Activated CD4-positive, alpha-beta T cell treated with anti-CD3 and anti-CD28 coated beads, Interleukin-2, amount 10 ng/mL, durations not matched to agents 24 days and 14 days (primary cell): ENCODE measurements at regions of chr1 and their contacts with region 1.

Region 1: GRCh38 chr1:76254104-76255030 is 179.8 kb downstream of the ST6GALNAC3 start:
- DNase-seq: no peak
- H3K4me3 Mint-ChIP-seq: no peak overlapping the region
- H3K27ac Mint-ChIP-seq: peak overlapping the region; percentile 46
- H3K4me1 Mint-ChIP-seq: peaks cover 39% of the 10 kb centered on the region
- H3K27me3 Mint-ChIP-seq: no peaks in the 10 kb centered on the region

Region 2: GRCh38 chr1:75991497-75992114 is 262.8 kb before region 1 on chr1:
- intact Hi-C with region 1: no loop called
- DNase-seq: peak; percentile 86
- H3K4me3 Mint-ChIP-seq: no peak overlapping the region
- H3K27ac Mint-ChIP-seq: no peak overlapping the region
- H3K4me1 Mint-ChIP-seq: no peaks in the 10 kb centered on the region
- H3K27me3 Mint-ChIP-seq: peaks cover 2% of the 10 kb centered on the region

Region 3: DNA sequence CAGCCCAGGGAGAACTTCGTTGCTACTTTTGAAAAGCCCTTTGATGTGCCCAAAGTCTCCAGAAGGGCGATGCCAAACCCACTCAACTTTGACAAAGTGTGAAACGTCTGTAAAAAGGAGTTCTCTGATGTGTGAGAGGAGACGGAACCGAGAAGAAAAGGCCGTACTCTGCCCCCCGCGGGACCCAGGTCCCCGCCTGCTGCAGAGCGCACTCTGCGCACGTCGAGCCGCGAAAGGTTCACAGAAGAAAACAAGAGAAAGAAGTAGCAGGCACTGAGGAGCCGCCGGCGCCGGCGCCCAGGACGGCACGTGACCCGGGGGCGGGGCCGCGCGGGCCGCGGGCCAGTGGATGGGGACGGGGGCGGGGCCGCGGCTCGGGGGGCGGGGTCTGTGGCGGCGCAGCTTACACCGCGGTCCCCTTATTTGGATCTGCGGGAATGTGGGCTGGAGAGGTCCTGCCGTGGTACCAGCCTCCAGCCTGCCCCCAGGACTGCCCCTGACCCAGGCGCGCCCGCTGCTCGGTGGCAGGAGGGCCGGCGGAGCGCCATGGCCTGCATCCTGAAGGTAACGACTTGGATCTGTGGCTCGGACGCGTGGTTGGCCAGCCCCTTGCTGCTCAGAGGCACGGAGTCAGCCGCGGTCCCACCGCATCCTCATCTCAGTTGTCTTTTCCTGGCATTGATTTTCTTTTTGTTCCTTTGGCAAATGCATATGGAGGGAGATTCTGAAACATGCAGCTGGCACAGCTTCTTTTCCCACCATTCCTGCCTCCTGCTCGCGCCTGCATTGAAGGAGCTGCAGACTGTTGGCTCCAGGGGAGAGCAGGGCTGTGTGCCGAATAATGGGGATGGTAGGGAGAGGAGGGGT is 179.8 kb before region 1 on chr1 and contains the start of gene ST6GALNAC3:
- intact Hi-C with region 1: loop called (anchors 10 kb)
- DNase-seq: peak; percentile 93
- H3K4me3 Mint-ChIP-seq: peak within 1 kb of the TSS; percentile 86
- H3K27ac Mint-ChIP-seq: peak within 1 kb of the TSS; percentile 47
- H3K4me1 Mint-ChIP-seq: peaks cover 13% of the 10 kb centered on the region
- H3K27me3 Mint-ChIP-seq: peaks cover 18% of the 10 kb centered on the region
- total RNA-seq, gene ST6GALNAC3: 0.28 TPM in 1 of 2 replicates, not detected in the other

Region 4: DNA sequence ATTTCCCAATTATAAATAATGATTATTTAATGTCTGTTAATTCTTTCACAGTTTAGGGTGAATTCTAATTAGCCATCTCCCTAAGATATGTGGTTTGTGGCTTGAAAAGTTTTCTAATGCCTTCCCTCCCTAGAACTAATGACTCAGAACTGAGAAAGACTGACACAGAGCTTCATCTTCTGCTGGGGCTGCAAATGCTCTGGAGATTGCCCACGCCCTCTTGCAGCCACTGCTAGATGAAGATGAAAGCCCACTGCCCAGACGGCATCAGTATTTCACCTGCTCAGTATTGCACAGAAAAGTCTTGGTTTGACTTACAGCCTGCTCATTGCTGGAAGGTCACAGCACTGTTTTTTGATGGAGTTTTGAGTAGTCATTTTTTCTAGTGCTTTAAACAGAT is 78.3 kb before region 1 on chr1:
- intact Hi-C with region 1: loop called (anchors 5 kb)
- DNase-seq: no peak
- H3K4me3 Mint-ChIP-seq: no peak overlapping the region
- H3K27ac Mint-ChIP-seq: no peak overlapping the region
- H3K4me1 Mint-ChIP-seq: peaks cover 4% of the 10 kb centered on the region
- H3K27me3 Mint-ChIP-seq: peaks cover 1% of the 10 kb centered on the region

Region 5: DNA sequence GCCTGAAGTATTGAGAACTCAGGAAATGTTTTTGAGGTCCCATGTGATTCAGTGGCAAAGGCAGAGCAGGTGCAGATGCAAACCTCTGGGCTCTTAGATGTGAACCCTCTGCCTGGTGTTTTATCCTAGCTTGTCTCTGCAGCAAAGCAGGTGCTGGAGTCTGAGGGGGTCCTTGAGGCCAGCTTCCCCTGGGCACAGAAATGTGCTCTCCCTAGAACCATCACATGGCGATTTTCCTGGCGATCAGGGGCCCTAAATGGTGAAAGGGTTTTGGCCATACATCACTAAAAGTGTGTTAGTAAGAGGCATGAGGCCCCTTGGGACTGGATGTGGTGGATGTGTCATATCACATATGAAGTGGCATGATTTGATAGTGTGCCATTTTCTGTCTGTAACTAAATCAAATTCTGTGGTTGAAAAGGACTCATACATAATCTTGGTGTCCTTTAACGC is 35.0 kb before region 1 on chr1:
- intact Hi-C with region 1: no loop called
- DNase-seq: no peak
- H3K4me3 Mint-ChIP-seq: no peak overlapping the region
- H3K27ac Mint-ChIP-seq: no peak overlapping the region
- H3K4me1 Mint-ChIP-seq: peaks cover 4% of the 10 kb centered on the region
- H3K27me3 Mint-ChIP-seq: peaks cover 2% of the 10 kb centered on the region

Region 6: GRCh38 chr1:76269155-76269554 is 14.8 kb after region 1 on chr1:
- intact Hi-C with region 1: loop called (anchors 1 kb)
- DNase-seq: peak; percentile 73
- H3K4me3 Mint-ChIP-seq: peak overlapping the region; percentile 55
- H3K27ac Mint-ChIP-seq: peak overlapping the region; percentile 82
- H3K4me1 Mint-ChIP-seq: peaks cover 57% of the 10 kb centered on the region
- H3K27me3 Mint-ChIP-seq: no peaks in the 10 kb centered on the region

Region 7: GRCh38 chr1:76294482-76295194 is 40.3 kb after region 1 on chr1:
- intact Hi-C with region 1: loop called (anchors 1 kb)
- DNase-seq: peak; percentile 67
- H3K4me3 Mint-ChIP-seq: peak overlapping the region; percentile 54
- H3K27ac Mint-ChIP-seq: peak overlapping the region; percentile 35
- H3K4me1 Mint-ChIP-seq: peaks cover 41% of the 10 kb centered on the region
- H3K27me3 Mint-ChIP-seq: no peaks in the 10 kb centered on the region

Region 8: DNA sequence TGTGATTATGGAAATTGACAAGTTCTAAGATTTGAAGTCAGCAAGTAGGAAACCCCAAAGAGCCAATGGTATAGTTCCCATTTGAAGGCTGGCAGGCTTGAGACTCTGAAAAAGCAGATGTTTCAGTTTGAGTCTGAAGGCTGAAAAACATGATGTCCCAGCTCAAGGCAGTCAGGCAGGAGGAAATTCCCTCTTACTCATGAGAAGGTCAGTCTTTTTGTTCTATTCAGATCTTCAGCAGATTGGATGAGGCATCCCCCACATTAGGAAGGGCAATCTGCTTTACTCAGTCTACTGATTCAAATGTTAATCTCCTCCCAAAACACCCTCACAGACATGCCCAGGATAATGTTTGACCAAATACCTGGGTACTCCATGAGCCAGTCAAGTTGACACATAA is 240.4 kb after region 1 on chr1:
- intact Hi-C with region 1: loop called (anchors 5 kb)
- DNase-seq: peak; percentile 59
- H3K4me3 Mint-ChIP-seq: peak overlapping the region; percentile 72
- H3K27ac Mint-ChIP-seq: peak overlapping the region; percentile 83
- H3K4me1 Mint-ChIP-seq: peaks cover 23% of the 10 kb centered on the region
- H3K27me3 Mint-ChIP-seq: no peaks in the 10 kb centered on the region

Region 9: DNA sequence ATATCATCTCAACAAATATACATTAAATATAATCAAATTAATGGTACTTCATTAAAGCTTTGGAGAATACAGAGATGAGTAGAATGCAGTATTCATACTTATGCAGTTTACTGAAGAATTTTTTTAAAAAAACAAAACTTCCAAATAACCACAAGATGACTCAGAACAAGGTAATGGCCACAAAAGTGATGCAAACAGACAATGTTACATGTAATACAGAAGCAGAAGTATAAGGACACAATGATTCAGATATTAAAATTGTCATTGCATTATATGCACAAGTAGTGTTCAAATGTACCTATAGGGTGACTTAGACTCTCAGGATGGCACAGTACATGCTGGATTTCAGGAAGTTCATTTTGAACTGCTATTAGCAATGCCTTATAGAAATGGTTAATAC is 385.7 kb after region 1 on chr1:
- intact Hi-C with region 1: no loop called
- DNase-seq: no peak
- H3K4me3 Mint-ChIP-seq: no peak overlapping the region
- H3K27ac Mint-ChIP-seq: no peak overlapping the region
- H3K4me1 Mint-ChIP-seq: no peaks in the 10 kb centered on the region
- H3K27me3 Mint-ChIP-seq: no peaks in the 10 kb centered on the region